ENCODE measurements at regions of chr3 and their contacts with region 1.

Region 1: GRCh38 chr3:194269610-194270145 is 81.5 kb downstream of the CPN2 start:
- DNase-seq: peak; percentile 52 to 88
- H3K4me3 ChIP-seq: peak overlapping the region in 1 of 2 donors; percentile 15
- H3K27ac ChIP-seq: peak overlapping the region; percentile 93 to 95
- H3K4me1 ChIP-seq: peaks cover 16 to 40% of the 10 kb centered on the region in 2 donors
- H3K27me3 ChIP-seq: no peaks in the 10 kb centered on the region
- CTCF ChIP-seq: peak; percentile 23 to 56 (median 27)

Region 2: DNA sequence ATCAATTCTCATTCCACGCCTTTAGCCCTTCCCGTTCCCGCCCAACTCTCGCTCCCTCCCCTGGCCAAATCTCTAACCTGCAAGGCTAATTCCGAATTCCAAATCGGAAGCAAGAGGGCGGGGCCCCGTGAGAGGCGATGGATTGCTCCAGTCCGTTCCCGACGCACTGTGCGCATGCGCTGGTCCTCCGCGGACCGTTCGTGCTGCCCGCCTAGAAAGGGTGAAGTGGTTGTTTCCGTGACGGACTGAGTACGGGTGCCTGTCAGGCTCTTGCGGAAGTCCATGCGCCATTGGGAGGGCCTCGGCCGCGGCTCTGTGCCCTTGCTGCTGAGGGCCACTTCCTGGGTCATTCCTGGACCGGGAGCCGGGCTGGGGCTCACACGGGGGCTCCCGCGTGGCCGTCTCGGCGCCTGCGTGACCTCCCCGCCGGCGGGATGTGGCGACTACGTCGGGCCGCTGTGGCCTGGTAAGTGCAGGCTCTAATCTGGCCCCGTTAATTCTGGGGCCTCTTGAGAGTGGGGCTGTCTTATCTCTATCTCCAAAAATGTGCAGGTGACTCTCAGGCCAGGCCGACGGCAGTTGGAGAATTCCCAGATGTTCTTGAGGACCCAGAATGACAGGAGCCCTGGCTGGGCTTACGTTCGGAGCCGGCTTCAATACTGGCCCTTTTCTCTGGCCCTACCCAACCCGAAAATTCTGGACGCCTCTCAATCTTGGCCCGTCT is 676.6 kb before region 1 on chr3 and contains the start of gene OPA1:
- intact Hi-C with region 1: loop called (anchors 10 kb)
- DNase-seq: peak; percentile 91 to 98
- H3K4me3 ChIP-seq: peak within 1 kb of the TSS; percentile 82 to 84
- H3K27ac ChIP-seq: peak within 1 kb of the TSS; percentile 77 to 88
- H3K4me1 ChIP-seq: peaks cover 4 to 10% of the 10 kb centered on the region in 2 donors
- H3K27me3 ChIP-seq: no peaks in the 10 kb centered on the region
- CTCF ChIP-seq: peak in 2 of 3 experiments; percentile 19 to 37
- total RNA-seq, gene OPA1: 19.5 TPM

Region 3: DNA sequence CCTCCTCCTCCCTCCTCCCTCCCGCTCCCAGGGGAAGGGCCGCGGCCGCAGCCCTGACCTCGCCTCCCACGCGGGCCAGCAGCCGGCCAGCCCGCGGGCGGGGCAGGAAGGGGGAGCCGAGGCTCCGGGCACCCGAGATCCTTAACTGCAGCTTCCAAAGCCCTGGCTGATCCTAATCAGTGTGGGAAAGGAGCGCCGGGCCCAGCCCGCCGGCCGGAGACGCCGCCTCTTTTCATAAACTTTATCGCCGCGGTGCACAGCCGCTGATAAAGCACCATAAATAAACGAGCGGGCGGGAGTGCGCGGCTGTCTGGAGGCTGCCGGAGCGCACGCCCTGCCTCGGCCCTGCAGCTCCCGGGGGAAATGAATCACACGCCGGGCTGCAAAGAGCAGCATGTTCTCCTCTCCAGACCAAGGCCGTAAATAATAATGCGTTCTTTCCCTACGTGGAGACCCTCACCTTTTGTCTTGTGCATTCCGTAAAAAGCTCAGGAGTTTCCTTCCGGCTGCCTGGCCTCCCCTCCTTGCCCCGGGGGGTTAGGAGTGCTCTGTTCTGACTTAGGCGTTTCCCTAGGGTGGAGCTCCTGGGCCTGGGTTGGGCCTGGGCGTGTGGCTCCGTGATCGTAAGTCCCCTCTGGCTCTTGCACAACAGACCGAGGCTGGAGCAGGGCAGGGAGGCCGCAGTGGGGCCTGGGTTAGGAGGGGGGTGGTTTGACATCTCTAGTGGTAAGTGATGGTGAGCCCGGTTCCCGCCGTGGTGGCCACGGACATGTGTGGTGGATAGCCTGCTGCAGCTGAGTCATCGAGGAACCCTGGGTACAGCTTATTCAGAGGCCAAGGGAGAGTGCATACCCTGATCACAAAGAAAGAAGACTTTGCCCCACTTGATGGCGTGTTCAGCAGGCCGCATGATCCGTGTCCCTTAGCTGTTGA is 266.3 kb before region 1 on chr3:
- intact Hi-C with region 1: loop called (anchors 5 kb)
- DNase-seq: peak; percentile 82 to 95
- H3K4me3 ChIP-seq: peak overlapping the region; percentile 55 to 57
- H3K27ac ChIP-seq: peak overlapping the region; percentile 70 to 90
- H3K4me1 ChIP-seq: peaks cover 4 to 29% of the 10 kb centered on the region in 2 donors
- H3K27me3 ChIP-seq: no peaks in the 10 kb centered on the region
- CTCF ChIP-seq: no peak

Region 4: GRCh38 chr3:194148383-194148782 is 121.3 kb before region 1 on chr3:
- intact Hi-C with region 1: no loop called
- DNase-seq: no peak
- H3K4me3 ChIP-seq: no peak overlapping the region
- H3K27ac ChIP-seq: no peak overlapping the region
- H3K4me1 ChIP-seq: no peaks in the 10 kb centered on the region
- H3K27me3 ChIP-seq: no peaks in the 10 kb centered on the region
- CTCF ChIP-seq: no peak

Region 5: DNA sequence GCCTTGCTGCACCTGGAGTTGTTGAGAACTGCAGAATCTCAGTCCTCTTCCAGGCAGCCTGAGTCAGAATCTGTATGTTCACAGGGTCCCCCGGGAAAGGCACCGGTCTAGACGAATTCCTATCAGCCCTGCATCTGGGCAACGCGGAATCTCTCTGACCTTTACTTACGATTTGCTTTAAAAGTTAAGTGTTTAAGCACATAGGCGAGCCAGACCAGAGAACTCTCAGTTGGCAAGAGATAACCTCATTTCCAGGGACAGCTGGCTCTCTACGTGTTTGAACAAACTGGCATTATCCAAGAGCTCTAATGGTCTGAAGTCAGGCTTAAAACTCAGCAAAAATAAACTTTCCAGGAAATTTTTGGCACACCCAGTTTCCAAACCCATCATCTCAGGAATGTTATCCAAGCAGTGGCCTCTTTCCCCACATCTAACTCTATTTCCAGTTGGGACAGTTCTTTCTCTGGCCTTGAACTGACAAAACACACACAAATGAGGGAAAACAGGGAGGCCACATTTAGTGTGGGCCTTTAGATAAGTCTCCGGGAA is 80.4 kb before region 1 on chr3:
- intact Hi-C with region 1: no loop called
- DNase-seq: no peak
- H3K4me3 ChIP-seq: no peak overlapping the region
- H3K27ac ChIP-seq: no peak overlapping the region
- H3K4me1 ChIP-seq: peaks cover 6 to 8% of the 10 kb centered on the region in 2 donors
- H3K27me3 ChIP-seq: no peaks in the 10 kb centered on the region
- CTCF ChIP-seq: no peak

Region 6: DNA sequence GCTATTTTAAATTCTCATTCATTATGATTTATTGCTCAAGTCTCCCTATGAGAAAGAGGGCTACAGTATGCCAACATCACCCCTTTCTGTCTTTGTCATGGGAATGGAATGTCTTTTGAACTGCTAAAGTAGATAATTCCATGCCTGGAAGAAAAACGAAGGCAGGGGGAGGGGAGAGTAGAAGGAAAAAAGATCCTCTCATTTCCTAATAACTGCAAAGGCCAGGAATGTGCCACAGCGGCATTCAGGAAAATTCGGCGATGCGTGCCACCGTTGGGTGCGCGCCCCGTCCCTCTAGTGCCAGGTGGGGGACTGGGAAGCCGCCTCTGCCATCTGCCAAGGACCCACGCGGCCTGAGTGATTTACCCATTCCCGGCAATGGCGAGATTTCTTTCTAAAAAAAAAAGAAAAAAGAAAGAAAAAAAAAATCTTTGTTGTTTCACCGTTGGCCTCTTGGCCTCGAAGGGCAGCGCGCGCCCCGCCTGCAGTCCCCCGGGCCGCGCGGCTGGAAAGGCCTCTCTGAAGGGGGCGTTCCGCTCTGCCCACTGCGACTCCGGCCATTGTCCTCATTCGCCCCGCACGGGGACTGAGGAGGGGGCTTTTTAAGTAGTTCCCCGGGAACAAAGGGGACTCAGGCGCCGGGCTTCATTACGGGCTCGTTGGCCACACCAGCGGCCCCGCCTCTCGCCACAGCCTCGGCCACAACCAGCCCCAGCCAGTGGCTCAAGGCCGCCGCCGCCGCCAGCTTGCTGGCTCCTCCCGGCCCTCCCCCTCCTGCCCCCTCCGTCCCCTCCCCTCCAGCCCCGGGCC is 27.0 kb after region 1 on chr3:
- intact Hi-C with region 1: loop called (anchors 1 kb)
- DNase-seq: peak in 1 of 2 donors; percentile 80
- H3K4me3 ChIP-seq: peak overlapping the region; percentile 35 to 52
- H3K27ac ChIP-seq: peak overlapping the region in 1 of 2 donors; percentile 1
- H3K4me1 ChIP-seq: peaks cover 0 to 18% of the 10 kb centered on the region in 2 donors
- H3K27me3 ChIP-seq: no peaks in the 10 kb centered on the region
- CTCF ChIP-seq: no peak

Region 7: GRCh38 chr3:194315088-194315964 is 45.6 kb after region 1 on chr3:
- intact Hi-C with region 1: loop called (anchors 2 kb)
- DNase-seq: peak in 1 of 2 donors; percentile 89
- H3K4me3 ChIP-seq: peak overlapping the region; percentile 53 to 54
- H3K27ac ChIP-seq: no peak overlapping the region
- H3K4me1 ChIP-seq: peaks cover 4 to 11% of the 10 kb centered on the region in 2 donors
- H3K27me3 ChIP-seq: no peaks in the 10 kb centered on the region
- CTCF ChIP-seq: peak; percentile 96 to 98 (median 96)

Region 8: GRCh38 chr3:194486540-194487288 is 217.0 kb after region 1 on chr3 and contains the start of gene ATP13A3:
- intact Hi-C with region 1: loop called (anchors 10 kb)
- DNase-seq: peak; percentile 57 to 95
- H3K4me3 ChIP-seq: peak within 1 kb of the TSS; percentile 68 to 75
- H3K27ac ChIP-seq: peak within 1 kb of the TSS; percentile 91 to 95
- H3K4me1 ChIP-seq: peaks cover 21 to 35% of the 10 kb centered on the region in 2 donors
- H3K27me3 ChIP-seq: no peaks in the 10 kb centered on the region
- CTCF ChIP-seq: no peak
- total RNA-seq, gene ATP13A3: 53.6 TPM

Region 9: GRCh38 chr3:194573691-194574437 is 304.2 kb after region 1 on chr3:
- intact Hi-C with region 1: loop called (anchors 10 kb)
- DNase-seq: peak in 1 of 2 donors; percentile 77
- H3K4me3 ChIP-seq: no peak overlapping the region
- H3K27ac ChIP-seq: peak overlapping the region; percentile 86 to 94
- H3K4me1 ChIP-seq: peaks cover 8 to 35% of the 10 kb centered on the region in 2 donors
- H3K27me3 ChIP-seq: no peaks in the 10 kb centered on the region
- CTCF ChIP-seq: peak; percentile 54 to 61 (median 59)